ENCODE measurements at regions of chr16 and their contacts with region 1.

Region 1: DNA sequence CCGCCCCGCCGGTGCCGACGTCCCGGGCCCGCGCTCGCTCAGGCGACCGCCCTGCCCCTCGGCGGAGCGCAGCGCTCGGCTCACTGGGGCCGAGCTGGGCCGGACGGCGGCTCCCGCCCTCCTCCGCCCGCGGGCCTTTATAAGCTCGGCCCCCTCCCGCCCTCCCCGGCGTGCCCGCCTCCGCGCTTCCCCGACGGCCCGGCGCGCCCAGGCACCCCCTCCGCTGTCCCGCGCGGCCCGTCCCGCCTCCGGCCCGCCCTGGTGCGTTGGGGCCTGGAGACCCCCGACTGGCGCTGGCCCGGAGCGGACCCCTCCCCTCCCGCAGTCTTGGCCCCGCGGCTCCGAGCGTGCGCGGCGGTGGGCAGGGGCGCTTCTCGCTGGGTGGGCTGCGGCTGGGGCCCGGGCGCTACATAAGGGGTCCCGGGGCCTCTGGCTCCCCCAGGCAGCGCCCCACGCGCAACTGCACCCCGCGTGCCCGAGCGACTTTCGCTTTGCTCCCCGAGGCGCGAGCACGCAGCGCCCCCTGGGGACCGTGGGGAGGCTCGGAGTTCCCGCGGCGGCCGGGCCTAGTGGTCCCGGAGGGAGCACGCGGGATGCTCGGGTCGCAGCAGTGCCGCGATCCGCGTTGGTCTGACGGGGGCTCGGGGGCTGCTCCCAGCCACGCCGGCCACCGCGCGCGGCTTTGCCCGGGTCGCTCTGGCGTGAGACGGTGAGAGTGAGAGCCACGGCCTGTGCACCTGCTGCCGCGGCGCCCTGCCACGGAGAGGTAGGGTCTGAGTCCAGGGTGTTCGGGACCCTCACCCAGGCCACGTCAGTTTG is at the start of gene PIEZO1:
- DNase-seq: peak; percentile 90
- H3K4me3 ChIP-seq: peak within 1 kb of the TSS; percentile 51 to 87 (median 72)
- H3K27ac ChIP-seq: peak within 1 kb of the TSS; percentile 89 to 100 (median 96)
- H3K4me1 ChIP-seq: peaks cover 0 to 44% (median 39%) of the 10 kb centered on the region in 4 donors
- H3K27me3 ChIP-seq: peaks cover 0 to under 1% (median 0%) of the 10 kb centered on the region in 3 donors
- CTCF ChIP-seq: peak; percentile 85 to 98 (median 94)
- EP300 ChIP-seq: no peak
- POLR2A ChIP-seq: no peak
- total RNA-seq, gene PIEZO1: 97.4 to 242 (median 158) TPM

Region 2: GRCh38 chr16:88743693-88744576 is 41.4 kb before region 1 on chr16:
- intact Hi-C with region 1: loop called (anchors 1 kb)
- DNase-seq: peak; percentile 91
- H3K4me3 ChIP-seq: no peak overlapping the region
- H3K27ac ChIP-seq: peak overlapping the region; percentile 38 to 87 (median 82)
- H3K4me1 ChIP-seq: peaks cover 0 to 52% (median 43%) of the 10 kb centered on the region in 4 donors
- H3K27me3 ChIP-seq: no peaks in the 10 kb centered on the region
- CTCF ChIP-seq: peak; percentile 85 to 95 (median 92)
- EP300 ChIP-seq: no peak
- POLR2A ChIP-seq: no peak

Region 3: GRCh38 chr16:88759245-88759975 is 25.9 kb before region 1 on chr16:
- intact Hi-C with region 1: loop called (anchors 1 kb)
- DNase-seq: peak; percentile 96
- H3K4me3 ChIP-seq: peak overlapping the region in 3 of 4 donors; percentile 32 to 41 (median 40)
- H3K27ac ChIP-seq: peak overlapping the region; percentile 91 to 100 (median 96)
- H3K4me1 ChIP-seq: peaks cover 0 to 93% (median 88%) of the 10 kb centered on the region in 4 donors
- H3K27me3 ChIP-seq: no peaks in the 10 kb centered on the region
- CTCF ChIP-seq: peak in 2 of 4 experiments; percentile 33 to 43
- EP300 ChIP-seq: peak in 2 of 4 donors; percentile 39 to 74
- POLR2A ChIP-seq: peak; percentile 86 to 88

Region 4: DNA sequence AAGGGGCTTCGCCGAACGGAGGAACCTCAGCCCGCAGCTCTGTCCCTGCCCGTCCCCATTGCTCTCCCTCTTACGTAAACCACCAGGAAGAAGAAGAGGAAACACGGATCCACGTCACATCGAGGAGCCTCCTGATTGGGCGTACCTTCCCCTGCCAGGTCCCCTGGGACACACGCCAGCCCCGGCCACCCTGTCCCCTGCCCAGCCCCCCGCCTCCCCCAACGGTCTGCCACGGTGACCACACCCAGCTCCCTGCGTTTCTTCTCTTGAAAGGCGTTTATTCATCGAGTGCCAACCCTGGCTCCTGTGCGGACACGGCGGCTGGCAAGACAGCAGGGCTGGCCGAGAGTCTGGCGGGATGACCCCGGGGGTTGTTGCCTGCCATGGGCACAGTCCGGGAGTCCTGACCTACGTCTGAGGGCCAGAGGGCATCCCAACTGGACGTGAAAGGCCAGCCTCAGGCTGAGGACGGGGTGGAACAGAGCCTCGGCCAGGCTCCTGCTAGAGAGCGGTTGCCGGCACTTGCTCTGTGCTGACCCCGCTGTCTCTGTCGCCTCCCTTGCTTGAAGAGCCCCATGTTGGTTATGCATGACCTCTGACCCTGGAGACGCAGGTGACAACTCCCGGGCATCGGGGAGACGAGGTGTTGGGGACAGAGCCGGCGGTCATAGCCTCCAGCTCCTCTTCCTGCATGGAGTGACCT is 267.7 kb after region 1 on chr16:
- intact Hi-C with region 1: no loop called
- DNase-seq: no peak
- H3K4me3 ChIP-seq: peak overlapping the region in 2 of 4 donors; percentile 10 to 18
- H3K27ac ChIP-seq: no peak overlapping the region
- H3K4me1 ChIP-seq: no peaks in the 10 kb centered on the region
- H3K27me3 ChIP-seq: peaks cover 9 to 90% (median 59%) of the 10 kb centered on the region in 3 donors
- CTCF ChIP-seq: no peak
- EP300 ChIP-seq: no peak
- POLR2A ChIP-seq: peak in 1 of 2 donors; percentile 19

Measured in sigmoid colon (tissue), 7 donors.